ENCODE measurements at regions of chr15 and their contacts with region 1.

Region 1: DNA sequence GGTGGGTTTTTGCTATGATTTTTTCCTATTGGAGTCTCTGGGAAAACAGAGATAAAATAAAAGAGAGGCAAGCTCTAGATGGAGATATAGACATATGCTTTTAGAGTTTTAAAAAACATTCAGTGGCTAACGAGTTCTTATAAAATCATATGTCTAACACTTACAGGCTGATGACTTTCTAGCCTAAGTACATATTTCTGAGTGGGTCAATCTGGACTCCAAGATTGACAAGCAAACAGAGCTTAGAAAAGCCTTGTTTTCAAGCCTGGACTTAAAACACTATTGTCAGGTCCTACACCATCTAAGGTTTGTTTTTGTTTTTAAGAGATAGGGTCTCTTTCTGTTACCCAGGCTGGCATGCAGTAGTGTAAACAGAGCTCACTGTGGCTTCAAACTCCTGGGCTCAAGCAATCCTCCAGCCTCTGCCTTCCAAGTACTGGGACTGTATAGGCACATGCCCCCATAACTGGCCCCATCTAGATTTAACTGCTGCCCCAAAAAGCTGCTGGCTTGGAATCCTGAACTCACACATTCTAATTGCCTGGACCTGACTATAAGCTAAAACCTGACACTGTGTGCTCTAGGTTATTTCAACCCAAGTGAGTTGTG is 86.3 kb downstream of the FBXL22 start:
- DNase-seq: no peak
- H3K4me3 ChIP-seq: no peak overlapping the region
- H3K27ac ChIP-seq: no peak overlapping the region
- H3K4me1 ChIP-seq: no peaks in the 10 kb centered on the region
- H3K27me3 ChIP-seq: no peaks in the 10 kb centered on the region
- CTCF ChIP-seq: no peak

Region 2: DNA sequence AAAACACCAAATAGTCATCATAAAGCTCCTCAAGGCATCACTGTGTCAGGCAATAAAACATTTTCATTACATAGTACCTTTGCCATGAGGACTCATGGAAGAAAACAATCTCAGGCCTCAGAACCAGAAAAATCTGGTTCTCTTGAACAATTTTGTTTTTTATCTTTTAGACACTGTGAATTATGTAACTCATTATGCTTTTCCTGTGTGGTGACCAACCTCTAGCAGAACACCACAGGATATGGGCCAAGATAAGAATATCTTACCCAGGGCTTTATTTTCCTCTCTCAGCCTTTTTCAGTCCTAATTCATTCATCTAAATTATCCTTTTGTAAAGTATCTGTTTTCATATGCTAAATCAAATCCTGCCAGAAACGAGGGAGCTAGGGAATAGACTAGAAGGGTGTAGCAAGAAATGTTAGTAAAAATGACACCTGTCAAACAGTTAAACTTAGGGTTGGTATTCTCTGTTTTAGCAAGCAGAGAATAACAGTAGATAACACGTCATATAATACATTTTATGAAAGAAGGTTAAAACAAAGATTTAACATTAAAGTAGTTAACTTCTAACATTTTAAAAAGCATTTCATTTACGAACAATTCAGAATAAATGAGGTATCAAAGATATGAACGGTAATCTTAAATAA is 24.8 kb after region 1 on chr15:
- CTCF ChIA-PET with region 1: interaction called, 4 read pairs
- POLR2A ChIA-PET with region 1: interaction called, 11 read pairs
- intact Hi-C with region 1: no loop called
- DNase-seq: no peak
- H3K4me3 ChIP-seq: no peak overlapping the region
- H3K27ac ChIP-seq: no peak overlapping the region
- H3K4me1 ChIP-seq: no peaks in the 10 kb centered on the region
- H3K27me3 ChIP-seq: no peaks in the 10 kb centered on the region
- CTCF ChIP-seq: no peak